Calu3 (cell line): ENCODE measurements at regions of chr12 and their contacts with region 1.

Region 1: GRCh38 chr12:47032644-47033043 is 46.8 kb upstream of the PCED1B start:
- DNase-seq: no peak
- H3K4me3 Mint-ChIP-seq: no peak overlapping the region
- H3K27ac Mint-ChIP-seq: peak overlapping the region; percentile 98
- H3K4me1 Mint-ChIP-seq: peaks cover 44% of the 10 kb centered on the region
- H3K27me3 Mint-ChIP-seq: no peaks in the 10 kb centered on the region
- CTCF ChIP-seq: no peak

Region 2: GRCh38 chr12:47071241-47071852 is 38.7 kb after region 1 on chr12:
- CTCF ChIA-PET with region 1: interaction called, 28 read pairs
- intact Hi-C with region 1: loop called (anchors 2 kb)
- DNase-seq: no peak
- H3K4me3 Mint-ChIP-seq: no peak overlapping the region
- H3K27ac Mint-ChIP-seq: peak overlapping the region; percentile 26
- H3K4me1 Mint-ChIP-seq: peaks cover 37% of the 10 kb centered on the region
- H3K27me3 Mint-ChIP-seq: no peaks in the 10 kb centered on the region
- CTCF ChIP-seq: peak; percentile 43

Region 3: GRCh38 chr12:47190271-47190750 is 157.7 kb after region 1 on chr12:
- CTCF ChIA-PET with region 1: no interaction called
- intact Hi-C with region 1: loop called (anchors 2 kb)
- DNase-seq: peak; percentile 42
- H3K4me3 Mint-ChIP-seq: peak overlapping the region; percentile 4
- H3K27ac Mint-ChIP-seq: peak overlapping the region; percentile 99
- H3K4me1 Mint-ChIP-seq: peaks cover 79% of the 10 kb centered on the region
- H3K27me3 Mint-ChIP-seq: no peaks in the 10 kb centered on the region
- CTCF ChIP-seq: no peak

Region 4: DNA sequence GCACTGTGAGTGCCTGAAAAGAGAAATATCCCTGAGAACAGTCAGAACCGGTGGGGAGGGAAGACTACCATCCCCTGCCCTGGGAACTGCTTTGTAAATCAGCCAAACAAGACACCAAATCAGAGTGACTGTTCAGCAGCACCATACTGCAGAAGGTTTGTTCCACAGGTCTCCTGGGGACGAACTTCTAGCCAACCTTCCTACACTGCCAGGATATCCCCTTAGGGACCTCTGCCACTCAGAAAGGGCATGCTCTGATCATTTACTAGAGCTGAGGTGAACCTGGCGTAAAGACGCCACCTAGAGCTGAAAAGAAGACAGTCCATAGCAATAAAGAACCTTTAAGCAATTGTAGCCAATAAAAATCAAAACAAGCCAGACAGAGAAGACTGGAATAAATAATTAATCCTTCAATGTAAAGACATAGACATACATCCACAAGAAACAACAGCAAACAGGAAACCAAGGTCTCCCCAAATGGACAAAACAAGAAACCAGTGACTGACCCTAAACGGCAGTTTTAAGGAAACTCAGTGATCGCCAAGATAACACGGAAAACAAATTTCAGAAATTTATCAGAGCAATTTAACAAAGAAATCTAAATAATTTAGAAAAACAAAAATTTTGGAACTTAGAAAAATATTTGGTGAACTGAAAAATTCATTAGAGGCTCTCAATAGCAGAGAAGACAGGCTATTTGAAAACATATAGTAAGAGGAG is 275.2 kb after region 1 on chr12:
- CTCF ChIA-PET with region 1: interaction called, 4 read pairs
- intact Hi-C with region 1: loop called (anchors 2 kb)
- DNase-seq: peak; percentile 51
- H3K4me3 Mint-ChIP-seq: no peak overlapping the region
- H3K27ac Mint-ChIP-seq: peak overlapping the region; percentile 2
- H3K4me1 Mint-ChIP-seq: peaks cover 16% of the 10 kb centered on the region
- H3K27me3 Mint-ChIP-seq: no peaks in the 10 kb centered on the region
- CTCF ChIP-seq: peak; percentile 38

Region 5: DNA sequence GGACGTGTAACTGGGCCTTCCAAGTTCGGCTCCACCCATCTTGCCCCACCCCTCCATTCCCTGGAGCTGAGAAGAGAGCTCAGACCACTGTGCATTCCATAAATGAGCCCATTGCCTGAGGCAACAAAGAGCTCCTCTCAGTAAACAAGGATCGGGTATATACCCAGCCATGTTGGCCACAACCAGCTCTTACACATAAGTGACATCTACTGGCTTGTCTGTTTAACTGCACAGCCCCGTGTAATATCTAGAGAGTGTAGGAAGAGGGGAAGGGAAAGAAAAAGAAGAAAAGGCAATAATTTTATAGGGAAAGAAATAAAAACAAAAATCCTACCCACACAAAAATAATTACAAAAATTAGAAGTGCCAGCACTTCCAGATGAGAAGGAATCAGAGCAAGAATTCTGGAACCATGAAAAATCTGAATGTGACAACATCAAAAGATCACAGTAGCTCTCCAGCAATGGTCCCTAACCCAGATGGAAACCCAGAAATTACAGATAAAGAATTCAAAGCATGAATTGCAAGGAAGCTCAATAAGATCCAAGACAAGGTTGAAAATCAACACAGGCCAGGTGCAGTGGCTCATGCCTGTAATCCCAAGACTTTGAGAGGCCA is 365.1 kb after region 1 on chr12:
- CTCF ChIA-PET with region 1: interaction called, 23 read pairs
- intact Hi-C with region 1: loop called (anchors 1 kb)
- DNase-seq: peak; percentile 30
- H3K4me3 Mint-ChIP-seq: no peak overlapping the region
- H3K27ac Mint-ChIP-seq: peak overlapping the region; percentile 60
- H3K4me1 Mint-ChIP-seq: peaks cover 8% of the 10 kb centered on the region
- H3K27me3 Mint-ChIP-seq: no peaks in the 10 kb centered on the region
- CTCF ChIP-seq: no peak

Region 6: DNA sequence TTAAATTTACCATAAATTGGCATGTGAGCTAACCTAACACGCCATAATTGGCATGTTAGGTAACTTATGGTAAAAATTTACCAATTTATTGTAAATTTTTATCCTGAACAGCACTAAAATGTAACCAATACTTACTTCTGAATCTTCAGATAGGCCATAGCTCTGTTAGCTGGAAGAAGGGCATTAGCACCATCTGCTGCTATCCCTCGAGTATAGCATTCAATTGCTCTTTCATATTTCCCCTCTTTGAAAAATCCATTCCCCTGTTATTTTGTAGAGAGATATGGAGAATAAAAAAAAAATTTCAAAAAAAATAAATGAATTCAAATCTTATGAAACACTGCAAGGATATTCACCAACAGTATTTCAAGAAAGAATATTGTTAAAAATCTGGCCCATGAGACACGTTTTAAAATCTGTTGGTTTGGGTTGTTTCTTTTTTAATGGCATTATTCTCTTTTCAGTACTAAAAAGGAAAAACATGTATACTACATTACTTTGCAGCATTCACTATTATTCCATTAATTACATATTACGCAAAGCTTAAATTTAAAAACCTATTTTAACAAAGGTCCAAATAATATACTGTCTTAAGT is 654.1 kb after region 1 on chr12:
- CTCF ChIA-PET with region 1: no interaction called
- intact Hi-C with region 1: loop called (anchors 5 kb)
- DNase-seq: peak; percentile 10
- H3K4me3 Mint-ChIP-seq: no peak overlapping the region
- H3K27ac Mint-ChIP-seq: no peak overlapping the region
- H3K4me1 Mint-ChIP-seq: no peaks in the 10 kb centered on the region
- H3K27me3 Mint-ChIP-seq: no peaks in the 10 kb centered on the region
- CTCF ChIP-seq: no peak